Dorsolateral prefrontal cortex (tissue), 120 donors: ENCODE measurements at regions of chr1 and their contacts with region 1.

Region 1: DNA sequence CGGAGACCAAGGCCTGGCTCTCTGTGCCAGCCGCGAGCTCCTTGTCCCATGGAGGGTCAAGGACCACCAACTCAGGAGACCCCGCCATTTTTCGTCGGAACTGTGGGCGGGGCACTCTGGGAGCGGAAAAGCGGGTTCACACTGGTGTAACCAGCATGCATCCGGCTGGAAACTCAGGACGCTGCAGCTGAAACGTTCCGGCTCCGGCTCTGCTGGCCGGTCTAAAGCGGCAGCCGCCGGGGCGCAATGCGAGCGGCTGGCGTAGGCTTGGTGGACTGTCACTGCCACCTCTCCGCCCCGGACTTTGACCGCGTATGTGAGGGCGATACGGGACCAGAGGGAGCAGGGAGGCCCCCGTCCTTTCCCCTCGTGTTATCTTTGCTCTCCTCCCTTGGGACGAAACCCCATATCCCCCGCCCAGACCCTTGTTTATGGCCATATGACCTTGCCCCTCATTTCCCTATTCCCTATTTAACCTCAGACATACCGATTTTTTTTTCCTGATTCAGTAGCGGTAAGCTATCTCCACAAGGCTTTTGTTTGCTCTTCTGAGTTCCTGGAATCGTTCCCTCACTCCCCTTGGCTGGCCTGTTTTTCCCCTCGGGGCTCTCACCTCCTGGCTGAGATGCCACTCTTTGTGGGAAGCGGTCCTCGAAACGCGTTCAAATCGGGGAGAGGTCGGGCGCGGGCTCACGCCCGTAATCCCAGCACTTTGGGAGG is at the starts of genes NSL1 and TATDN3:
- DNase-seq: peak; percentile 76 to 93 (median 87)
- H3K4me3 ChIP-seq: peak within 1 kb of the TSS; percentile 68 to 100 (median 91)
- H3K27ac ChIP-seq: peak within 1 kb of the TSS; percentile 88 to 99 (median 97)
- H3K27me3 ChIP-seq: no peaks in the 10 kb centered on the region
- CTCF ChIP-seq: peak in 45 of 56 donors; percentile 2 to 68 (median 34)
- total RNA-seq, gene NSL1: 33.9 to 65.0 (median 45.3) TPM
- total RNA-seq, gene TATDN3: 17.4 to 66.3 (median 32.1) TPM

Region 2: DNA sequence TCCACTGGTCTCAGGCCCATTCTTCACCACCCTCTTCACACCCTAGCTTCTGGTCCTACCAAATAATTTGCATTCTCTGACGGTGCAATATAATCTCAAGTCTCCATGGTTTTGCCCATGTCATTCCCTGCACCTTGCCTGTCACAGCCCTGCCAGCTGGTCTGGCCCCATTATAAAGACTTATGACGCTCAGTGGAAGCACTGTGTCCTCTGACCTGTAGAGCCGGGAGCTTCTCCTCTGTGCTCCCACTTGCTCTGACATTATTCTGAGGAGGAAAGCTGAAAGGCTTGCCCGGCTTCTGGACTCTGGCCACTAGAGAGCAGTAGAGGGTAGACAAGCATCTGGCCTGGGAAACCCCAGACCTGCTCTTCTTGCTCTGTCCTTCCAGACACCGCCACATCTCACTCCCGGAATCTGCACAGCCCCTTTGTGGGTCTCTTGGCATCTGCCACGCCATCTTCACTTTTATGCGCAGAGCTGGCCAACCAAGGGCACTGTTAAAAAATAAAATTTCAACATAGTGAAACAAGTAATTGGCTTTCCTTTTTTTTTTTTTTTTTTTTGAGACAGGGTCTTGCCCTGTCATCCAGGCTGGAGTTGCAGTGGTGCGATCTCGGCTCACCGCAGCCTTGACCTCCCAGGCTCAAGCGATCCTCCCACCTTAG is 314.7 kb before region 1 on chr1:
- intact Hi-C with region 1: loop called in 1 of 2 experiments (anchors 5 kb)
- DNase-seq: peak; percentile 66 to 91 (median 86)
- H3K4me3 ChIP-seq: peak overlapping the region in 16 of 59 donors; percentile 2 to 42 (median 26)
- H3K27ac ChIP-seq: peak overlapping the region in 42 of 59 donors; percentile 1 to 83 (median 62)
- H3K27me3 ChIP-seq: no peaks in the 10 kb centered on the region
- CTCF ChIP-seq: peak; percentile 81 to 97 (median 90)

Region 3: DNA sequence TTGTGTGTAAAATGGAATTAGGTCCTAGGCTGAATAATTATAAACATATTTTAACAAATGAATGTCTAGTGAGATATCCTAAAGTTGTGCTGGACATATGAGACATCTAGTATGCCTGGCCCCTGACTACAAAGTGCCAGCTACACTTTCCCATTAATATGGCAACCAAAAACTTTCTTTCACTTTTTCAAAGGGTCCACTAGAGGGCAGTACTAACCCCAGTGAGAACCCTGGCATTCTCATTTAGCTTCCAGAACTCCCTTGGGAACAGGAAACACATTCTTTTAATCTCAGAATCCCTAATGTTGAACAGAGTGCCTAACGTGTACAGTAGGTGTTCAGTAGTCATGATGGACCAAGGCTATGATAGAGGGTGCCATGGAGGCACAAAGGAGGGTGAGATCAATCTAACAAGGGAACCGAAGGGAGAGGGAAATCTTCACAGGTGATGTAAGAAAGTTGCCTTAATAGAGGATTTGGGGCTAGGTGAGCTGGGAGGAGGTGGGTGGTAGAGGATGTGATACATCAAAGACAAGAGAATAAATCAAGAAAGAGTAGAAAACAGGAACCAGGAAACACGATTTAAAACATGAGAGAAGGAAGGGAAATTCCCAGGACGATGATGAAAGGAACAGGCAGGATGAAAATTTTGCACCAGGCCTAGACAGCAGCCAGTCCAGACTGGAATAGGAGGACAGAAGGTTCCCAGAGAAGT is 41.9 kb before region 1 on chr1:
- intact Hi-C with region 1: loop called in 1 of 2 experiments (anchors 5 kb)
- DNase-seq: no peak
- H3K4me3 ChIP-seq: no peak overlapping the region
- H3K27ac ChIP-seq: peak overlapping the region in 9 of 59 donors; percentile 0 to 51 (median 24)
- H3K27me3 ChIP-seq: no peaks in the 10 kb centered on the region
- CTCF ChIP-seq: peak; percentile 39 to 82 (median 69)

Region 4: DNA sequence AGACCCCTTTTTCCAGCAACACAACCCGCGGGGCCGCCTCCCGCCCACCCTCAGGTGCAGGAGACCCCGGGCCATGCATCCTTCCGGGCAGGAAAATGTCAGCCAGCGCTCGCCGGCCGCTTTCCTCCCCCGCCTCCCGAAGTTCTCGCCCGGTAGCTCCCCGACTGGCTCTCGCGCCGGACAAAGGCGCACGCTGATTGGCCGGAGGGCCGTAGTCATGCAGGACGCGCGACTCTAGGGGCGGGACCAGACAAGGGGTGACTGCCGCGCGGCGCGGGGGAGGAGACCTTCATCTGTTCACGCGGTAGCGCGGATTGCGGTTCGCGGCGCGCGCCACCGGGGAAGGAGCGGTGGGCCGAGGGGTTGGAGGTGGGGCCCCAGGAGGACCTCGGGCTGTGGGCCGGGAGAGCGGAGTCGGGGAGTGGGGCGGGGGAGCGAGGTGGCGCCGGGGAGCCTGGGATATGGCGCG is 66.2 kb after region 1 on chr1 and contains the start of gene FLVCR1:
- intact Hi-C with region 1: loop called (anchors 5 kb)
- DNase-seq: peak; percentile 96 to 99 (median 98)
- H3K4me3 ChIP-seq: peak within 1 kb of the TSS; percentile 70 to 99 (median 94)
- H3K27ac ChIP-seq: peak within 1 kb of the TSS; percentile 19 to 96 (median 85)
- H3K27me3 ChIP-seq: no peaks in the 10 kb centered on the region
- CTCF ChIP-seq: peak in 12 of 56 donors; percentile 4 to 45 (median 25)
- total RNA-seq, gene FLVCR1: 6.5 to 21.2 (median 11.6) TPM

Region 5: DNA sequence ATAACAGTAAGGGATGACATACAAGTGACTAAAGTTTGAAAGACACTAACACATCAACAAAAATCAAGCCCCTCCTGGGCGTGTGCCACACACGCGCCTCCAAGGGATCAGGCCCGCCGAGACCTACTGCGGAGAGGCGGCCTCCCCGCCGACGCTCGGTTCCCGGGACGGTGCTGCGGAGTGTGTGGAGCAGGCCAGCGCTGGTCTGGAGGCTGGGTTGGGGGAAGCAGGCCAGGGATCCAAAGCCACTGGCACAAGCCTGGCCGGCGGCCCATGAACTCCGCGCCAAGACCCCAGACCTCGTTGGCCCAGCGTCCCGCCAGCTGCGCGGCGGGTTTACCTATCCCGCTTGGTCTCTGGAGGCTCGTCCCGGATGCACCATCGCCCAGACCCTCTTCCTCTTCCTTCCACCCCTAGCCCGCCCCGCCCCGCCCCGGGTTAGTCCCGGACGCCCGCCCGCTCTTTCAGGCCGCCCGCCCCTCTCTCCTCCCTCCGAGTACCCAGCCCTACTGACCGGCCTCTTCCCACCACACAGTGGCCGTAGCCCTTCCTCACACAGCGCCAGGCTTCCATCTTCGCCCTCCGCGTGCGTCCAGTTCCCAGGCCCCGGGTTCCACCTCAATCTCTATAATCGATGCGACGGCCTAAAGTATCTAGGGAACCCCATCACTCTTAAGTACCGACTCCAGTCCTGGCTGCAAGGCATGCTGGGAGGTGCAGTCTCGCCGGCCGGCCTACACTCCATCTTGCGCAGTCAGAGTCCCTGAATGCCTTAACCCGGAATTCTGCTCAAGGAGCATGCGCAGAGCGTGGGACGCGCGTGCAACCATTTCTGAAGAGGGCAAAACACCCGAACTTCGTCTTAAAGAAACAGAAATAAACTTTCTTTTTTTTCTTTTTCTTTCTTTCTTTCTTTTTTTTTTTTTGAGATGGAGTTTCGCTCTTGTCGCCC is 223.5 kb after region 1 on chr1 and contains the start of gene ANGEL2:
- intact Hi-C with region 1: loop called in 1 of 2 experiments (anchors 10 kb)
- DNase-seq: peak; percentile 96 to 99 (median 98)
- H3K4me3 ChIP-seq: peak within 1 kb of the TSS; percentile 65 to 99 (median 88)
- H3K27ac ChIP-seq: peak within 1 kb of the TSS; percentile 53 to 97 (median 91)
- H3K27me3 ChIP-seq: no peaks in the 10 kb centered on the region
- CTCF ChIP-seq: peak in 16 of 56 donors; percentile 5 to 50 (median 24)
- total RNA-seq, gene ANGEL2: 42.5 to 77.5 (median 57.2) TPM

Region 6: GRCh38 chr1:213070406-213070805 is 278.6 kb after region 1 on chr1:
- intact Hi-C with region 1: no loop called
- DNase-seq: no peak
- H3K4me3 ChIP-seq: no peak overlapping the region
- H3K27ac ChIP-seq: peak overlapping the region in 1 of 59 donors; percentile 4
- H3K27me3 ChIP-seq: no peaks in the 10 kb centered on the region
- CTCF ChIP-seq: peak in 18 of 56 donors; percentile 8 to 43 (median 18)

Region 7: DNA sequence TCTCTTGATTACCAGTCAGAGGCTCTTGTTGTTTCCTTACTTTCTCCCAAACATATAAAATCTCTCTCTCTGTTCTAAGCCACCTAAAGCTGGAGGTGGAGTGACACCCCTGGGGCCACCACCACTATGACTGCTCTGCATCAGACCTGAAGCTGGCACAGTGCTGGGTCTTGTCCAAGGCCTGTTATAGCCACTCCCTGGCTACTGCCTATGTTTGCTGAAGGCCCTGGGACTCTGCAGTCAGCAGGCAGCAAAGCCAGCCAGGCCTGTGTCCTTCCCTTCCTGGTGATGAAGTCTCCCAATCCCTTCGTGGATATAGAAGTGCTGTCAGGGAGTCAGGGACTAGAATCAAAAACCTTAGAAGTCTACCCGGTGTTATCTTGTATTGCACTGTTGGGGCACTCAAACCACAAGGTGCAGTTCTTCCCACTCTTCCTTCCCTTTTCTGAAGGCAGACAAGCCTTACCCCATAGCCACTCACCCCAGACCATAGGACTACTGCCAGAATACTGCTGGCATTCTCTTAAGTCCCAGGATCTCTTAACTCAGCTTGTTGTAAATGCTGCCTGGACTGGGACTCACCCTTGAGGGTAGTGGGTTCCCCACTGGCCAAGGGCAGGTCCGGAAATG is 362.3 kb after region 1 on chr1:
- intact Hi-C with region 1: no loop called
- DNase-seq: no peak
- H3K4me3 ChIP-seq: no peak overlapping the region
- H3K27ac ChIP-seq: no peak overlapping the region
- H3K27me3 ChIP-seq: no peaks in the 10 kb centered on the region
- CTCF ChIP-seq: no peak